ENCODE measurements at regions of chr6 and their contacts with region 1.

Region 1: GRCh38 chr6:168370310-168370991 is 50.9 kb upstream of the DACT2 start:
- DNase-seq: no peak
- ATAC-seq: peak; percentile 85

Region 2: DNA sequence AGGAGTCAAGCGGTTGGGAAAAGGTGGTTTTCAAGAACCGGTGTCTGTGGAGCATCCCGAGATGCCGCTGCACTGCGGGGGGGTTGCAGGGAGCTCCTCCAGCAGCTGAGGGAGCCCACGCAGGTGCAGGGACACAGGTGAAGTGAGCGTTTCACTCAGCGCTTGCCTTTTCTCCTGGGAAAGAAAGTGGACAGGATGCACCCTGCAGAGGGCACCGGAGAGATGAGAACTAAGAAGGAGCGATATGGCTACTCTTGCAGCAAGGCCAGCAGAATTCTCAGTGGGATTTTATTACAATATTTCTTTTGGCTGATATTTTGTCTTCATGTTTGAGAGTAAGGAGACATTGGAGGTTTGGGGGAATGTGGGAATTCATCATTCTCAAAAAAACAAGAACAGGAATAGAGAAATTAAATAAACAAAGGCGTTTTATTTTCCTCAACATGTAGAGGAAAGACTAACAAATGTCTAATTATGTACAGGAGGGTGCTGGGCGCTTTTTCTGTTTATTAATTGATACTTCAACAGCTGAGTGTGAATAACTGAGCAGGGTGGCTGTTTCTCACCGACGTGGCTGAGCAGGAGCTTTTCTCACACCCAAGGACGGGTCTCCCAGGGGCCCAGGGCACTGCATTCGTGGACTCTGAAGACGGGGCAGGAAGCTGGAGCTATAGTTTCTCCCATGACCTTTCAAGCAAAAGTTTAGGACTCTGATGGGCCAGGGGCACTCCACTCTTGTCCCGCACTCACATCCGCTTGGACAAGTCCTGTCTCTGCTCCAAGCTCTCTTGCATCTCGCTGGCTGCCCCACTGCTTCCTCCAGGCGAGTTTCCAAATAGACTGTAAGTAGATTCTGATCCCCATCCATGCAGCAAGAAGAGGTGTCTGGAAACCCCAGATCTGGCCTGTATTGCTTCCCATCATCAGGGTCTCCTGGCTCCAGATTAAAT is 246.6 kb after region 1 on chr6:
- intact Hi-C with region 1: loop called (anchors 5 kb)
- DNase-seq: no peak
- ATAC-seq: peak; percentile 60

Region 3: GRCh38 chr6:168884646-168885086 is 514.2 kb after region 1 on chr6:
- intact Hi-C with region 1: loop called (anchors 1 kb)
- DNase-seq: peak; percentile 80
- ATAC-seq: peak; percentile 87